Transverse colon (tissue), 4 donors: ENCODE measurements at regions of chr10 and their contacts with region 1.

Region 1: DNA sequence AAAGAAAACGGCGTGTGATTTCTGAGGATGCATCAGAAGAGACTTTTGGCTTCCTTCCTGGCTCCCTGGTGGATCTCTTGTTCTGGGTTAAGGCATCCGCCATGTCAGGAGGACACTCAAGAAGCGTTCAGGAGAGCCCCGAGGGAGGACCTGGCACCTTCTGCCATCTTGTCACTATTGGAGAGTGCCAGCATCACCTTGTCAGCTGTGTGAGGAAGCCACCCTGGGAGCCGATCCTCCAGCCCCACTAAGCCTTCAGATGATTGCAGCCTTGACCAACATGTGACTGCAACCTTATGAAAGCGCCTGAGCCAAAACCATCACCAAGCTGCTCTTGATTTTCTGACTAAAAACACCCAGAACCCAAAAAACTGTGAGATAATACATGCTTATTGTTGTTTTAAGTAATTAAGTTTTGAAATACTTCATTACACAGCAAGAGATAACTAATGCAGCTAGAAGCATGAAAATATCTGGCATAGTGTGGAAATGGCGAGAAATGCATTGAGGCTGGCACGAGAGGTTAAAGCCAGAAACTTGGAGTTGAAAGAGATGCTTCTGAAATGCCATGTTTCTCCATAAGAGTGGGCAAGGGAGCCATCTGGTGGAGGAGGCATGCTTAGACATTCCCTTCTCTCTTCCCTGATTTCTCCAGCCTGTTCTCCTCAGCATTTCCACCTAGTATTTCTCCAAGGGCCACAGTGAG is 5.4 kb upstream of the ZFYVE27 start:
- DNase-seq: peak; percentile 79
- H3K4me3 ChIP-seq: no peak overlapping the region
- H3K27ac ChIP-seq: no peak overlapping the region
- H3K4me1 ChIP-seq: peaks cover 0 to 14% (median 5%) of the 10 kb centered on the region in 4 donors
- H3K27me3 ChIP-seq: no peaks in the 10 kb centered on the region
- CTCF ChIP-seq: peak; percentile 76 to 93 (median 82)
- EP300 ChIP-seq: no peak
- POLR2A ChIP-seq: no peak

Region 2: DNA sequence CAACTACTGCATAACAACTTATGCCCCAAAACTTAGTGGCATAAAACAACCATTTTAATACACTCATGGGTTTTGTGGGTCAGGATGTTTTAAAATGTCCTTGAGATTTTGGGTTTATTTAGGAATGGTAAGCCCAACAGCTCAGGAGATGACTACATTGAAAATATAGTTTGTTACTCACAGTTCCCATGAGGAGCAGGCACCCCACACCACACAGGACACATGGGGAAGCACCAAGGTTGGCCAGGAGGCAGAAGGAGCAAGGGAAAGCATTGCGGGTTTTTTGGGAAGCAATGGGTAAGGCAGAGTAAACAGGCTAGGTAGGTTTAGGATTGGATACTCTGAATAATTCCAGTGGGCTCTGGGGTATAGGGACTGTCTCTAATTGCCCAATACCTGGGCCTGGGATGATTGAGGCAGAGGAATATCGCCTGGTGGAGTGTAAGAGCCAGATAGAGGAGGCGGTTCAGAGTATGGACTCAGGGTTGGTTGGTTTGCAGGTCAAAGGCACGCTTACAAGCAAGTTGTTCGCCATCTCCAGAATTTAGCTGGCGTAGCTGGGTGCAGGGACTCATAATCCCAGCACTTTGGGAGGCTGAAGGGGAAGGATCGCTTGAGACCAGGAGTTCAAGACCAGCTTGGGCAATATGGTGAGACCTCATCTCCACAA is 28.0 kb before region 1 on chr10:
- in situ Hi-C with region 1: no loop called
- intact Hi-C with region 1: loop called (anchors 1 kb)
- DNase-seq: no peak
- H3K4me3 ChIP-seq: no peak overlapping the region
- H3K27ac ChIP-seq: no peak overlapping the region
- H3K4me1 ChIP-seq: peaks cover 0 to 9% (median 4%) of the 10 kb centered on the region in 4 donors
- H3K27me3 ChIP-seq: no peaks in the 10 kb centered on the region
- CTCF ChIP-seq: no peak
- EP300 ChIP-seq: no peak
- POLR2A ChIP-seq: no peak